ENCODE measurements at regions of chr14 and their contacts with region 1.

Region 1: GRCh38 chr14:105398044-105398725 is at the start of gene TEX22:
- DNase-seq: peak; percentile 48 to 71
- H3K4me3 ChIP-seq: peak within 1 kb of the TSS; percentile 79
- H3K27ac ChIP-seq: peak within 1 kb of the TSS; percentile 34
- H3K4me1 ChIP-seq: peaks cover 7% of the 10 kb centered on the region; the same call in 1 of the 2 replicates
- H3K27me3 ChIP-seq: no peaks in the 10 kb centered on the region
- CTCF ChIP-seq: no peak
- total RNA-seq, gene TEX22: 2.6 and 6.5 TPM in 2 replicates

Region 2: GRCh38 chr14:104826189-104826860 is 571.9 kb before region 1 on chr14:
- CTCF ChIA-PET with region 1: no interaction called
- POLR2A ChIA-PET with region 1: no interaction called
- intact Hi-C with region 1: no loop called
- DNase-seq: peak; percentile 56 to 87
- H3K4me3 ChIP-seq: peak overlapping the region; percentile 76
- H3K27ac ChIP-seq: no peak overlapping the region
- H3K4me1 ChIP-seq: 0 out of 2 replicates have a peak, but pooled peaks cover 7% of the 10 kb centered on the region
- H3K27me3 ChIP-seq: no peaks in the 10 kb centered on the region
- CTCF ChIP-seq: peak; percentile 72

Region 3: GRCh38 chr14:105589161-105590062 is 191.2 kb after region 1 on chr14:
- CTCF ChIA-PET with region 1: no interaction called
- POLR2A ChIA-PET with region 1: interaction called, 27 read pairs
- intact Hi-C with region 1: no loop called
- DNase-seq: no peak
- H3K4me3 ChIP-seq: no peak overlapping the region
- H3K27ac ChIP-seq: no peak overlapping the region
- H3K4me1 ChIP-seq: no peaks in the 10 kb centered on the region
- H3K27me3 ChIP-seq: peaks cover 18% of the 10 kb centered on the region
- CTCF ChIP-seq: no peak

Measured in PC-9 (cell line).